ENCODE measurements at regions of chr12 and their contacts with region 1.

Region 1: GRCh38 chr12:121060149-121061001 is 21.3 kb upstream of the OASL start:
- DNase-seq: peak; percentile 74
- H3K4me3 Mint-ChIP-seq: peak overlapping the region; percentile 70
- H3K27ac Mint-ChIP-seq: peak overlapping the region; percentile 87
- H3K4me1 Mint-ChIP-seq: peaks cover 11% of the 10 kb centered on the region
- H3K27me3 Mint-ChIP-seq: no peaks in the 10 kb centered on the region

Region 2: DNA sequence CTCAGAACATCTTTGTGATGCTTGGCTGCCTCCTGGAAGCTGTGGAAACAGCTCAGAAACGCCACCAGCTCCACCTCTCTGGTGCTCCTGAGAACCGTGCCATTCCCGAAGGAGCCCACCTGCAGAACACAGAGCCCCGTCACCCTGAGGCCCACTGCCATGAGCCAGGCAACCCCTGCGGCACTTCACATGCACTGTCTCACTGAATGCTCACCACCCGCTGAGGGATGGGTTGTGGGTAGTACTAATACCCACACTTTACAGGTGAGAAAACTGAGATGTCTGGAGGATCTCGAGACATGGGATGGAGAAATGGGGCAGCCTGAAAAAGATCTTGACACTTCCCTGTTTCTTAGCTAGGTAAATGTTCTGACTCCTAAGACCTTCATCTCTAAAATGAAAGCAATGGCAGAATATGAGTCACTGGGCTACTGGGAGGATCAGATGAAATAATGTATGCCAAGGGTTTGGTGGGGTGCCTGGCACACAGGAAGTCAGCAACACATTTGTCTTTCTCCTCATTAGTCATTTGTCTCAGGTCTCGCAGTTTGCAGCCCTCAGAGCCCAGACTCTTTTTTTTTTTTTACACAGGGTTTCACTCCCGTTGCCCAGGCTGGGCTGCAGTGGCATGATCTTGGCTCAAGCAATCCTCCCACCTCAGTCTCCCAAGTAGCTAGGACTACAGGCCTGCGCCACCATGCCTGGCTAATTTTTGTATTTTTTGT is 26.6 kb before region 1 on chr12:
- CTCF ChIA-PET with region 1: interaction called, 15 read pairs
- POLR2A ChIA-PET with region 1: interaction called, 5 read pairs
- intact Hi-C with region 1: no loop called
- DNase-seq: peak; percentile 80
- H3K4me3 Mint-ChIP-seq: peak overlapping the region; percentile 10
- H3K27ac Mint-ChIP-seq: peak overlapping the region; percentile 72
- H3K4me1 Mint-ChIP-seq: peaks cover 58% of the 10 kb centered on the region
- H3K27me3 Mint-ChIP-seq: no peaks in the 10 kb centered on the region

Region 3: DNA sequence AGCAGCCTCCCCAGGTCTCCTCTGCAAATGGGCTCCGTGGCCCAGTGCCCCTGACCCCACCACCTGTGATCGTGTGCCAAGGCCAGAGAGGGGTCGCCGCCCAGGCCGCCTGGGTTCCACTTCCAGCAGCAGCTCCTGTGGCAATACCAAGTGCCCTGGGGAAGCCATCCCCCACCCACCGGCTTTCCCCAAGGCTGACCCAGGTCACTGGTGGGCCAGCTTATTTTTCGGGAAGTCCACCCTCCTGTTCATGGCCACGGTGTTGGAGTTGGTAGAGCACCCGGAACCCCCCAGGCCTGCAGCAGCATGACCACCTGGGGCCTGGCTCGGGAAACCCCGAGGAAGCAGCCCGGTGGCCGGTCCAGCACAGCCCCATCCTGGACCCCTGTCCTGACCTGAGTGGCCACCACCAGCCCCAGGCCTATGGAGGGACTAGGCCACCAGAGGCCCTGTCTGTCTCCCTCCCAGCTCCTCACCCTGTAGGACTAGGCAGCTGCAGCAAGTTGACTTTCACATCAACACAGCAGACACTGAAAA is 19.4 kb after region 1 on chr12:
- CTCF ChIA-PET with region 1: no interaction called
- POLR2A ChIA-PET with region 1: no interaction called
- intact Hi-C with region 1: no loop called
- DNase-seq: no peak
- H3K4me3 Mint-ChIP-seq: no peak overlapping the region
- H3K27ac Mint-ChIP-seq: no peak overlapping the region
- H3K4me1 Mint-ChIP-seq: no peaks in the 10 kb centered on the region
- H3K27me3 Mint-ChIP-seq: no peaks in the 10 kb centered on the region

Region 4: DNA sequence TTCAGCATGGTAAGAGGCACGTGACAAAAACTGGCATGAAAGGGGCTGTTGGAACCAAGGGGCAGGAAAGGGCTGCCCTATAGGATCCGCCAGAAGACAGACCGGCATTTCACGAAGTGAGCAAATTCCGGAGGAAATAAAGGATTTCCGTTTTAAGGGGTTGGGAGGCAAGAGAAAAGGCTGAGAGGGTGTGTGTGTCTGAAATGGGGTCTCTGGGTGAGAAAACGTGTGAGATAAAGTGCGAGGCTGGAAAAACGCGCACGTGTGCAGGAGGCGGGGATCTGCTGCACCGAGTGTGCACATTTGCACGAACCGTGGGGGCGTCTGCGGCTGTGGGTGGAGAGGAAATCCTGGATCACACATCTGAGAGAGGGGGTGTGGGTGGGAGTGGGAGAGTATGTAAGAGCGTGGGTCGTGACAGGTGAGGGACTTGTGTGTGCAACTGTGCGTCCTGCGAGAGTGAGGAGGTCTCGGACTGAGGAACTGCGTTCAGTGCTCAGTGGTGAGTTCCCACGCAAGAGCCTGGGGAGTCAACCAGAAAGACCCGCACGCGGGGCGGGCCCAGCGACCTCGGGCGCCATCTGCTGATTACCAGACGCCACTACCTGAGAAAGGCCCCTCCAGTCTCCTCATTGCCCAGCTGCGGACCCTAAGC is 35.3 kb after region 1 on chr12:
- CTCF ChIA-PET with region 1: interaction called, 34 read pairs
- POLR2A ChIA-PET with region 1: no interaction called
- intact Hi-C with region 1: loop called (anchors 1 kb)
- DNase-seq: peak; percentile 87
- H3K4me3 Mint-ChIP-seq: peak overlapping the region; percentile 68
- H3K27ac Mint-ChIP-seq: no peak overlapping the region
- H3K4me1 Mint-ChIP-seq: peaks cover 35% of the 10 kb centered on the region
- H3K27me3 Mint-ChIP-seq: peaks cover 1% of the 10 kb centered on the region

Region 5: GRCh38 chr12:121223292-121224285 is 163.2 kb after region 1 on chr12:
- CTCF ChIA-PET with region 1: interaction called, 10 read pairs
- POLR2A ChIA-PET with region 1: no interaction called
- intact Hi-C with region 1: no loop called
- DNase-seq: peak; percentile 70
- H3K4me3 Mint-ChIP-seq: no peak overlapping the region
- H3K27ac Mint-ChIP-seq: peak overlapping the region; percentile 85
- H3K4me1 Mint-ChIP-seq: peaks cover 43% of the 10 kb centered on the region
- H3K27me3 Mint-ChIP-seq: no peaks in the 10 kb centered on the region

Measured in activated CD4-positive, alpha-beta memory T cell treated with anti-CD3 and anti-CD28 coated beads for 36 hours (primary cell).